ENCODE measurements at regions of chr1 and their contacts with region 1.

Region 1: GRCh38 chr1:169711469-169712281 is at the start of gene SELL:
- DNase-seq: peak; percentile 86
- ATAC-seq: peak; percentile 90
- H3K4me3 Mint-ChIP-seq: peak within 1 kb of the TSS; percentile 76
- H3K27ac Mint-ChIP-seq: peak within 1 kb of the TSS; percentile 82
- H3K4me1 Mint-ChIP-seq: peaks cover 25% of the 10 kb centered on the region
- H3K27me3 Mint-ChIP-seq: peaks cover 29% of the 10 kb centered on the region
- total RNA-seq, gene SELL: 61.4 to 85.1 TPM

Region 2: GRCh38 chr1:169546087-169546995 is 165.3 kb before region 1 on chr1:
- CTCF ChIA-PET with region 1: interaction called, 13 read pairs
- DNase-seq: peak; percentile 66
- ATAC-seq: peak; percentile 83
- H3K4me3 Mint-ChIP-seq: no peak overlapping the region
- H3K27ac Mint-ChIP-seq: no peak overlapping the region
- H3K4me1 Mint-ChIP-seq: no peaks in the 10 kb centered on the region
- H3K27me3 Mint-ChIP-seq: no peaks in the 10 kb centered on the region

Region 3: GRCh38 chr1:169586395-169587255 is 125.0 kb before region 1 on chr1 and contains the start of gene F5:
- CTCF ChIA-PET with region 1: interaction called, 40 read pairs
- DNase-seq: peak; percentile 88
- ATAC-seq: peak; percentile 98
- H3K4me3 Mint-ChIP-seq: peak within 1 kb of the TSS; percentile 81
- H3K27ac Mint-ChIP-seq: peak within 1 kb of the TSS; percentile 83
- H3K4me1 Mint-ChIP-seq: peaks cover 48% of the 10 kb centered on the region
- H3K27me3 Mint-ChIP-seq: peaks cover 3% of the 10 kb centered on the region
- total RNA-seq, gene F5: 3.1 to 14.0 TPM

Region 4: DNA sequence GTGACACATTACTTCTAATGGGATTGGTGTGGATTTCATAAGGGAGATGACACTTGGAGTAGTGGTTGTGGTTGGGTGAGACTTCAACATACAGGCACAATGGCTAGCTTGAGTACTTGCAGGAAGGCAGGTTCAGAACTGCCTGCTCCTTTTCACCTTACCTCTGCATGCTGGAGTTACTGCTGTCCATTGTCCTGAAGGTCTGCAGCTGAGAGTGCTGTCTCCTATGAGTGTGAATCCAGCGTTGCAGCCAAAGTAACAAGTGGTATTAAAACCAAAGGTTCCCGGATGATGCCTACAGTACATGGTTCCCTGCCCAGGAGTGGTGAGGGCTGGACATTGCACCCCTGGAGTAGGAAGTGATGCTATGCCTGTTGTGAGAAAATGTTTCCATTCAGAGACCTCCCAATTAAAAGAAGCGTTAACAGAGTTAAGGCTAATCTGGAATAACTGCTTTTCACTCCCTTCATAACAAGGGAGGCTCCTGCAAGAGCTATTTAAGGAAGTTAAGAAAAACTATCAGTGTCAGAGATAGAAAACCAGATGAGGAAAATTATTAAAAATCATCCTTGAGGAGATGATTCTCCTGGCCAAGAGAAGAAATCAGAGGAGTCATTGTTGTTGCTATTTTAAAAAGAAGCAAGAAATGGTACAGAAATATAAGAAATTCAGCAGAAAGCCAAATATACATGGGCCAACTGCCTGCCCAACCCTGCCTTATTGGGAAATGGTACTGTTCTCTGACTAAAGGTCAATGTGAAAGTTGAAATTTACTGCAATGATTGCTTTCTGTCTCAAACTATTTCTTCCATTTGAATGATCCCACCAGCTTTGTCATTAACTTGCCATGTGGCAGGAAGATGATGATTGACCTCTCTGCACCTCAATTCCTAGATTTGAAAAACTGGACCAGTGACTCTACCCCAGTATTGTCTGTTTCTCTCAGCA is 115.6 kb before region 1 on chr1:
- CTCF ChIA-PET with region 1: interaction called, 77 read pairs
- DNase-seq: peak; percentile 57
- ATAC-seq: peak; percentile 70
- H3K4me3 Mint-ChIP-seq: no peak overlapping the region
- H3K27ac Mint-ChIP-seq: no peak overlapping the region
- H3K4me1 Mint-ChIP-seq: peaks cover 24% of the 10 kb centered on the region
- H3K27me3 Mint-ChIP-seq: peaks cover 17% of the 10 kb centered on the region

Region 5: DNA sequence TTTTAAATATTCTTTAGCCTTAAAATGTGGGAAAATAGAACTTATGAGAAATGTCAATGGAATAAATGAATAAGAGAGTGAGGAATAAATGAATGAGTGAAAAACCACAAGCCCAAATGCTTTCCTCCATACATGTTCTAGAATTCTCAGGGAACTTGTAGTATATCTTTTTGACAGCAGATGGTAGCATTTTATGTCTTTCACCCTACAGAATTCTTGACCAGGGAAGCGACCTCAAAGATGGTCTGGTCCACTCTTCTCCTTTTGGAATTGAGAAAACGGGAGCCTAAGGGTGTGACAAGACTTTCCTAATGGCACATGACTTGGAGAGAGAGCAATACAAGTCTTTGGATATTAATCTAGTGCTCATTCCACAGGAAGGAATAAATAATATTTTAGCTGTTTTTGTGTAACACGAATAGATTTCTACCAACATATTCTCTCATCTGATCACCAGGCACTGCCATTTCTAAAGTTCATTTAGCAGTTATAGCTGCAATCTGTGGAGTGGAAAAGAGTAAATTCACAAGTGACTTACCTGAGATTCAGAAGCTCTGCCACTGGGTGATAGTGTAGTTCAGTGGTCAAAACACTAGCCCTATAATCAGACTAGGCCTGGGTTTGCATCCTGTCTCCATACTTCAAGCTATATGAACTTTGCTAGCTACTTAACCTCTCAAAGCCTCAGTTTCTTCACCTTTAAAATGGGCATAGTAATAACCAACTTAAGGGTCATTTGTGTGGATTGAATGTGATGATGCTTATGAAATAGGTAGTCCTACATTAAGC is 110.4 kb before region 1 on chr1:
- CTCF ChIA-PET with region 1: interaction called, 77 read pairs
- DNase-seq: no peak
- ATAC-seq: no peak
- H3K4me3 Mint-ChIP-seq: no peak overlapping the region
- H3K27ac Mint-ChIP-seq: no peak overlapping the region
- H3K4me1 Mint-ChIP-seq: peaks cover 30% of the 10 kb centered on the region
- H3K27me3 Mint-ChIP-seq: peaks cover 16% of the 10 kb centered on the region

Region 6: GRCh38 chr1:169694304-169695075 is 17.2 kb before region 1 on chr1:
- CTCF ChIA-PET with region 1: interaction called, 16 read pairs
- DNase-seq: peak; percentile 75
- ATAC-seq: peak; percentile 62
- H3K4me3 Mint-ChIP-seq: no peak overlapping the region
- H3K27ac Mint-ChIP-seq: peak overlapping the region; percentile 79
- H3K4me1 Mint-ChIP-seq: peaks cover 94% of the 10 kb centered on the region
- H3K27me3 Mint-ChIP-seq: no peaks in the 10 kb centered on the region

Region 7: DNA sequence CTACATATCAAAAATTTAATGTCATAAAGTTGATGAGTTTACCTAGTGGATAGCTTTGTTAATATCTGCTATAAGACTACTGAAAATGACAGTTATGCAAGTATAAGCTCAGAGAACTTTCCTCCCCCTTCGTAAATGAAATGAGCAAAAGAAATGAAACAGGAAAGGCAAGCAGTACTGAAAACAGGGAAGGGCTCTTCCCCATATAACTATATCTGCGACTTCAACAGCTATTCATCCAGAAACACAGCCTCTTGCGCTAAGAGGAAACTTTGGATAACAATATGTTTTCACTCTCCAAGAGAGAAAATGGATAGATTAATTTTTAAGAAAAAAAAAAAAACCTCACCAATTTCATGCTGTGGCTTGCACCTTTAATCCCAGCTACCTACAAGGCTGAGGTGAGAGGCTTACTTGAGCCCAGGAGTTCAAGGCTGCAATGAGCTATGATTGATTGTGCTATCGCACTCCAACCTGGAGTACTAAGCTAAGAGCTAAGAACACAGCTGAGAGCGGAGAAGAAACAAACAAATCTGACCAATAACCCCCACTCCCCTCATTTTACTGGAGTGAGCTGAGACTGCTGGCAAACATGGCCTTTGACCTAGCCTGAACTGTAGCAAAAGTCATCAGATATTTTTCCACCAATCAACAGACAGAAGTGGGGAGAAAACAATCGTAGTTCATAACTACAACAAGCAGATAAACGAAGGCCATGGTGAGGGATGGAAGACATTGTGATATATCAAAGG is 54.1 kb after region 1 on chr1:
- CTCF ChIA-PET with region 1: no interaction called
- DNase-seq: no peak
- ATAC-seq: no peak
- H3K4me3 Mint-ChIP-seq: no peak overlapping the region
- H3K27ac Mint-ChIP-seq: no peak overlapping the region
- H3K4me1 Mint-ChIP-seq: no peaks in the 10 kb centered on the region
- H3K27me3 Mint-ChIP-seq: peaks cover 7% of the 10 kb centered on the region

Region 8: GRCh38 chr1:169853341-169853740 is 141.7 kb after region 1 on chr1:
- CTCF ChIA-PET with region 1: no interaction called
- DNase-seq: no peak
- ATAC-seq: no peak
- H3K4me3 Mint-ChIP-seq: no peak overlapping the region
- H3K27ac Mint-ChIP-seq: no peak overlapping the region
- H3K4me1 Mint-ChIP-seq: peaks cover 1% of the 10 kb centered on the region
- H3K27me3 Mint-ChIP-seq: no peaks in the 10 kb centered on the region